Panc1 (cell line): ENCODE measurements at regions of chr1 and their contacts with region 1.

Region 1: GRCh38 chr1:188514917-188515316 is 1686.2 kb downstream of the PLA2G4A start:
- DNase-seq: no peak
- ATAC-seq: no peak
- H3K4me3 ChIP-seq: no peak overlapping the region
- H3K27ac ChIP-seq: no peak overlapping the region
- H3K4me1 ChIP-seq: no peaks in the 10 kb centered on the region
- H3K27me3 ChIP-seq: no peaks in the 10 kb centered on the region
- CTCF ChIP-seq: no peak

Region 2: DNA sequence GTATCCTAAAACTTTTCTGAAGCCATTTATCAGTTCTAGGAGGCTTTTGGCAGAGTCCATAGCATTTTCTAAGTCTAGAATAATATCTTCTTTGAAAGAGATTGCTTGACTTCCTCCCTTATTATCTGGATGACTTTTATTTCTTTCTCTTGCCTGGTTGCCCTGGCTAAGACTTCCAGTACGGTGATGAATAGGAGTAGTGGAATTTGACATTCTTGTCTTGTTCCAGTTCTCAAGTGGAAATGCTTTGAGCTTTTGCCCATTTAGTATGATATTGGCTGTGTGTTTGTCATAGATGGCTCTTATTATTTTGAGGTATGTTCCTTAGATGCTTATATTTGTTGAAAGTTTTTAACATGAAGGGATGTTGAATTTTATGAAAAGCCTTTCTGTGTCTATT is 38.3 kb before region 1 on chr1:
- CTCF ChIA-PET with region 1: no interaction called
- POLR2A ChIA-PET with region 1: no interaction called
- in situ Hi-C with region 1: no loop called
- intact Hi-C with region 1: no loop called
- DNase-seq: no peak
- ATAC-seq: no peak
- H3K4me3 ChIP-seq: no peak overlapping the region
- H3K27ac ChIP-seq: no peak overlapping the region
- H3K4me1 ChIP-seq: no peaks in the 10 kb centered on the region
- H3K27me3 ChIP-seq: no peaks in the 10 kb centered on the region
- CTCF ChIP-seq: no peak

Region 3: DNA sequence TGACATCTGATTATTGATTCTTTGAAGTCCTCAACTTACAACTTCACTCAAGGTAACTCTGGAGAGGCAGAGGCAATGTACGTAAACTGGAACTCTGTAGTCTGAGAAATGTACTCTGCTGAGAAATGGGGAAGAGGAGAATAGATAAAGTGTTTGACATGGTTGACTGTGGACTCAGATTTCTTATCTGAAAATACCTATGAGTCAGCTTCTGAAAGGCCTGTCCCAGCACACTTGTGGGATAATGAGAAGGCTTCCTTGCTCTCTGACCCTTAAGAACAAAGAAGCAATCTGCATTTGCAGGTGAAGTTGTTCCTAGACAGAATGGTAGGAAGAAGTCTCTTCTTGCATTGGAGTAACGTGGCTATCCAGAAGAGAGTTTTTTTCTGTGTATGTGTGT is 389.3 kb after region 1 on chr1:
- CTCF ChIA-PET with region 1: no interaction called
- POLR2A ChIA-PET with region 1: interaction called, 12 read pairs
- in situ Hi-C with region 1: no loop called
- intact Hi-C with region 1: no loop called
- DNase-seq: no peak
- ATAC-seq: no peak
- H3K4me3 ChIP-seq: no peak overlapping the region
- H3K27ac ChIP-seq: no peak overlapping the region
- H3K4me1 ChIP-seq: no peaks in the 10 kb centered on the region
- H3K27me3 ChIP-seq: no peaks in the 10 kb centered on the region
- CTCF ChIP-seq: no peak